Activated T-helper 1 cell treated with anti-CD3 and anti-CD28 coated beads, Interleukin-12 subunit alpha, Interleukin-12 subunit beta, Interleukin-2, Interleukin-4 antibody, amounts not matched to agents 30 ng/mL and 10 ng/mL and 1 ng/mL, durations not matched to agents 14 hours and 24 hours and 36 hours (primary cell): ENCODE measurements at regions of chr7 and their contacts with region 1.

Region 1: GRCh38 chr7:73578342-73579127 is at the start of gene TBL2:
- DNase-seq: peak; percentile 98
- H3K4me3 Mint-ChIP-seq: peak within 1 kb of the TSS; percentile 93
- H3K27ac Mint-ChIP-seq: peak within 1 kb of the TSS; percentile 96
- H3K4me1 Mint-ChIP-seq: peaks cover 28% of the 10 kb centered on the region
- H3K27me3 Mint-ChIP-seq: no peaks in the 10 kb centered on the region
- total RNA-seq, gene TBL2: 46.5 and 48.2 TPM in 2 replicates

Region 2: GRCh38 chr7:73522105-73522872 is 56.2 kb before region 1 on chr7 and contains the start of gene BAZ1B:
- intact Hi-C with region 1: loop called (anchors 1 kb)
- DNase-seq: peak; percentile 97
- H3K4me3 Mint-ChIP-seq: peak within 1 kb of the TSS; percentile 91
- H3K27ac Mint-ChIP-seq: peak within 1 kb of the TSS; percentile 97
- H3K4me1 Mint-ChIP-seq: peaks cover 60% of the 10 kb centered on the region
- H3K27me3 Mint-ChIP-seq: no peaks in the 10 kb centered on the region
- total RNA-seq, gene BAZ1B: 110 and 111 TPM in 2 replicates

Region 3: GRCh38 chr7:73593207-73594045 is 14.9 kb after region 1 on chr7:
- intact Hi-C with region 1: loop called (anchors 1 kb)
- DNase-seq: no peak
- H3K4me3 Mint-ChIP-seq: no peak overlapping the region
- H3K27ac Mint-ChIP-seq: no peak overlapping the region
- H3K4me1 Mint-ChIP-seq: no peaks in the 10 kb centered on the region
- H3K27me3 Mint-ChIP-seq: peaks cover 12% of the 10 kb centered on the region

Region 4: GRCh38 chr7:73667344-73668102 is 89.0 kb after region 1 on chr7 and contains the start of gene VPS37D:
- intact Hi-C with region 1: loop called (anchors 1 kb)
- DNase-seq: peak; percentile 91
- H3K4me3 Mint-ChIP-seq: peak within 1 kb of the TSS; percentile 78
- H3K27ac Mint-ChIP-seq: no peak within 1 kb of the TSS
- H3K4me1 Mint-ChIP-seq: peaks cover 7% of the 10 kb centered on the region
- H3K27me3 Mint-ChIP-seq: peaks cover 36% of the 10 kb centered on the region
- total RNA-seq, gene VPS37D: 0.18 and 0.34 TPM in 2 replicates

Region 5: GRCh38 chr7:73718905-73719805 is 140.6 kb after region 1 on chr7 and contains the start of gene STX1A:
- intact Hi-C with region 1: loop called (anchors 1 kb)
- DNase-seq: peak; percentile 72
- H3K4me3 Mint-ChIP-seq: peak within 1 kb of the TSS; percentile 88
- H3K27ac Mint-ChIP-seq: peak within 1 kb of the TSS; percentile 89
- H3K4me1 Mint-ChIP-seq: peaks cover 34% of the 10 kb centered on the region
- H3K27me3 Mint-ChIP-seq: peaks cover 15% of the 10 kb centered on the region
- total RNA-seq, gene STX1A: 24.9 and 26.7 TPM in 2 replicates

Region 6: DNA sequence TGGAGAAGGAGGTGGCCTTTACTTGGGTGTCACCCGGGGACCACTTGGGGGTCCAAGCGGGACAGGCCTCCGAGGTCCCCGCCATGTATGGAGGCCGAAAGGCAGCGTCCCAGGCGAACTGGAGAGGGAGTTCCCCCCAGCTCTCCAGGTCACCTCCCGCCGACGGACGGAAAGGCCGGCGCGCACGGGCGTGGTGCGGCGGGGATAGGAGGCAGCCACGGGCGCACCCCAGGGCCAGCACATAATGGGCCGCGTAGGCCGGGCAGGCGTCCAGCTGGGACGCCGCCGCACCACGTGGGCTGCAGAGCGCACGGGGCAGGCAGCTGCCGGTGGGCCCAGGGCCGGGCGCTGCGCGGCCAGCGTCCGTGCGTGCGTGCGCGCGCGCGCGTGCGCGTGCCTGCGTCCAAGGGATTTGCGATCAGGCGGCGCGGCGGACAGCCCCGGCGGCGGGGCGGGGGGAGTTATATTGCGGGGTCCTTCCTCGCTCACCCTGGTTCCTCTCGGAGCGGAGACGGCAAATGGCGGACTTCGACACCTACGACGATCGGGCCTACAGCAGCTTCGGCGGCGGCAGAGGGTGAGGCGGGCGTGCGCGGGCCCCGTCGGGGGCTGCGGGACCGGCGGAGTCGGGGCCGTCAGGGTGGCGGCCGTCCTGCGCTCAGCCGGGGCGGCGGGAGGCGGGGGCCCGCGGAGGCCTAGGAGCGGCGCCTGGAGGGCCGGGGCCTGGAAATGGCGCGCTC is 595.5 kb after region 1 on chr7 and contains the start of gene EIF4H:
- intact Hi-C with region 1: loop called (anchors 1 kb)
- DNase-seq: peak; percentile 93
- H3K4me3 Mint-ChIP-seq: peak within 1 kb of the TSS; percentile 94
- H3K27ac Mint-ChIP-seq: peak within 1 kb of the TSS; percentile 90
- H3K4me1 Mint-ChIP-seq: peaks cover 45% of the 10 kb centered on the region
- H3K27me3 Mint-ChIP-seq: peaks cover 3% of the 10 kb centered on the region
- total RNA-seq, gene EIF4H: 343 and 355 TPM in 2 replicates